Cardiac septum (tissue), 1 donor: ENCODE measurements at regions of chr4 and their contacts with region 1.

Region 1: GRCh38 chr4:103156106-103156505 is 42.0 kb downstream of the CENPE start:
- DNase-seq: no peak

Region 2: GRCh38 chr4:101944649-101945048 is 1211.5 kb before region 1 on chr4:
- intact Hi-C with region 1: loop called (anchors 5 kb)
- DNase-seq: no peak

Region 3: DNA sequence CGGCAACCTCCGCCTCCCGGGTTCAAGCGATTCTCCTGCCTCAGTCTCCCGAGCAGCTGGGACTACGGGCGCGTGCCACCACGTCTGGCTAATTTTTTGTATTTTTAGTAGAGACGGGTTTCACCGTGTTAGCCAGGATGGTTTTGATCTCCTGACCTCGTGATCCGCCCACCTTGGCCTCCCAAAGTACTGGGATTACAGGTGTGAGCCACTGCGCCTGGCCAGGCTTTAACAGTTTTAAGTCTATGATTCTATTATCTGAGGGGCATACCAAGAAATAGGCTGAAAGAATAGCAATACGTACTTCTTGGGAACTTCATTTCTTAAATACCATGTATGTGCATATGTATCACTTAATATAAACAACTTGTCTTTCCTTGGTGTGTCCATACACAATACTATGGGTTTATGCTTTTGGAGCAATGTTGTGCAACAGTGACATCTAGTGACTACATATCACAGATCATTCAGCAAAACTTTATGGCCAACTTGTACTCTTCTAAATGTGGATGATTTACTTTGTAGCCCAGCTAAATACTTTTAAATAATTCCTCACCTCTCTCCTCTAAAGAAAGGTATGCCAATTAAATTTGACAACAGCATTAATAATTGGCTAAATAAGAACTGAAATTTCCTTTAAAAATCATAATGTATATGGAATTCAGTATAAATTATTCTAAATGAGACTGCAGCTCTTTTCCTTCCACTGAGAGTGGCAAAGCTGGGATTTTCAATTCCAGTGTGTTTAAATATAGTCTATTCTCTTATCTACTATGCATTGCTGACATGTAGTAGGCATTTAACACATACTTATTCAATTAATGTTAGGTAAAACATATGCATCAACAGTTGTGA is 147.0 kb before region 1 on chr4:
- intact Hi-C with region 1: no loop called
- DNase-seq: no peak